ENCODE measurements at regions of chrX and their contacts with region 1.

Region 1: GRCh38 chrX:28177202-28177601 is 196.0 kb upstream of the DCAF8L1 start:
- DNase-seq: no peak
- ATAC-seq: no peak
- H3K4me3 ChIP-seq: no peak overlapping the region
- H3K4me3 Mint-ChIP-seq: no peak overlapping the region
- H3K27ac ChIP-seq: no peak overlapping the region
- H3K27ac Mint-ChIP-seq: no peak overlapping the region
- H3K4me1 ChIP-seq: no peaks in the 10 kb centered on the region
- H3K4me1 Mint-ChIP-seq: no peaks in the 10 kb centered on the region
- H3K27me3 ChIP-seq: no peaks in the 10 kb centered on the region
- H3K27me3 Mint-ChIP-seq: no peaks in the 10 kb centered on the region

Region 2: DNA sequence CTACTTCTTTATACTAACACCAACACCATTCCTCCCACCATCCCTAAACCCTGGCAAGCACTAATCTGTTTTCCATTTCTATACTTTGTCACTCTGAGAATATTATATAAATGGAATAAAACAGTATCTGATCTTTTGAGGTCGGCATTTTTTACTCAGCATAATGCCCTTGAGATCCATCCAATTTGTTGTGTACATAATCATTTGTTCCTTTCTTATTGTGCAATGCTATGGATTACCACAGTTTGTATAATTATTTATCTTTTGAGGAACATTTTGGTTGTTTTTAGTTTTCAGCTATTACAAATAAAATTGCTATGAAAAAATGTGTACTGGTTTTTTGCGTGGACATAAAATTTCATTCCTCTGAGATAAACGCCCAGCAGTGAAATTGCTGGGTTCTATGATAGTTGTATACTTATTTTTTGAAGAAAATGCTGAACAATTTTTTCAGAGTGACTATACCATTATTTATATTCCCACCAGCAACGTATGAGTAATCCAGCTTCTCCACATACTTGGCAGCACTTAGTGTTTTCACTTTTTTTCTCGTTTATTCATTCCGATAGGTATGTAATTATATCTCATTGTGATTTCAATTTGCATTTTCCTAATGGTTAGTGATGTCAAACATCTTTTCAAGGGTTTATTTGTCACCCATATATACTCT is 41.7 kb before region 1 on chrX:
- CTCF ChIA-PET with region 1: no interaction called
- POLR2A ChIA-PET with region 1: no interaction called
- intact Hi-C with region 1: loop called in 1 of 2 experiments (anchors 2 kb)
- DNase-seq: no peak
- ATAC-seq: no peak
- H3K4me3 ChIP-seq: no peak overlapping the region
- H3K4me3 Mint-ChIP-seq: no peak overlapping the region
- H3K27ac ChIP-seq: no peak overlapping the region
- H3K27ac Mint-ChIP-seq: no peak overlapping the region
- H3K4me1 ChIP-seq: no peaks in the 10 kb centered on the region
- H3K4me1 Mint-ChIP-seq: no peaks in the 10 kb centered on the region
- H3K27me3 ChIP-seq: no peaks in the 10 kb centered on the region
- H3K27me3 Mint-ChIP-seq: no peaks in the 10 kb centered on the region

Region 3: DNA sequence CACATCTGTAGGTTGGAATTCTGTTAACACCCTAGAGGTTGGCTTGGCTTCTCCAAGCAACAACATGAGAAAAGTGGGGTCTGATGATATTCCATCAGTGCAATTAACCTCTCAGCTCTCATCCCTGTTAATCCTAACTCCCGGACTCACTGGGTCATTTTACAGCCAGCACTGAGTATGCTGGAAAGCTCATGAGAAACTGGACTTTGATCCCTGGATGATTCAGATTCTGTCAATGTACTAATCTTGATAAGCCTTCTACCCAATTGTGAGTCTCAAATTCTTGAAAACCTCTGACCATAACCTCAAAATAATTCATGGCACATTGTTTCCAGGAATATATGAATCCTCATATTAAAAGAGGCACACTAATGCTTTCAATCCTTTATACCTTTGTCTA is 48.3 kb after region 1 on chrX:
- CTCF ChIA-PET with region 1: no interaction called
- POLR2A ChIA-PET with region 1: no interaction called
- intact Hi-C with region 1: loop called in 1 of 2 experiments (anchors 10 kb)
- DNase-seq: no peak
- ATAC-seq: no peak
- H3K4me3 ChIP-seq: no peak overlapping the region
- H3K4me3 Mint-ChIP-seq: no peak overlapping the region
- H3K27ac ChIP-seq: no peak overlapping the region
- H3K27ac Mint-ChIP-seq: no peak overlapping the region
- H3K4me1 ChIP-seq: no peaks in the 10 kb centered on the region
- H3K4me1 Mint-ChIP-seq: no peaks in the 10 kb centered on the region
- H3K27me3 ChIP-seq: no peaks in the 10 kb centered on the region
- H3K27me3 Mint-ChIP-seq: no peaks in the 10 kb centered on the region

Measured in naive thymus-derived CD4-positive, alpha-beta T cell (primary cell).